Naive thymus-derived CD8-positive, alpha-beta T cell (primary cell): ENCODE measurements at regions of chr22 and their contacts with region 1.

Region 1: GRCh38 chr22:35648066-35649025 is at the start of gene APOL6:
- DNase-seq: peak in 9 of 10 donors; percentile 29 to 78 (median 63)
- ATAC-seq: peak; percentile 74 to 76
- H3K4me3 Mint-ChIP-seq: peak within 1 kb of the TSS; percentile 98 to 100 (median 100)
- H3K27ac Mint-ChIP-seq: peak within 1 kb of the TSS; percentile 98 to 100 (median 99)
- H3K4me1 Mint-ChIP-seq: peaks cover 15 to 55% (median 48%) of the 10 kb centered on the region in 4 donors
- H3K27me3 Mint-ChIP-seq: no peaks in the 10 kb centered on the region
- polyA plus RNA-seq, gene APOL6: 13.6 to 20.8 (median 15.5) TPM

Region 2: GRCh38 chr22:35660291-35661127 is 12.2 kb after region 1 on chr22:
- POLR2A ChIA-PET with region 1: interaction called, 26 read pairs
- DNase-seq: peak; percentile 27 to 83 (median 64)
- ATAC-seq: peak; percentile 80 to 89
- H3K4me3 Mint-ChIP-seq: peak overlapping the region; percentile 53 to 85 (median 75)
- H3K27ac Mint-ChIP-seq: peak overlapping the region; percentile 93 to 98 (median 96)
- H3K4me1 Mint-ChIP-seq: peaks cover 26 to 78% (median 72%) of the 10 kb centered on the region in 4 donors
- H3K27me3 Mint-ChIP-seq: no peaks in the 10 kb centered on the region